ENCODE measurements at regions of chr1 and their contacts with region 1.

Region 1: DNA sequence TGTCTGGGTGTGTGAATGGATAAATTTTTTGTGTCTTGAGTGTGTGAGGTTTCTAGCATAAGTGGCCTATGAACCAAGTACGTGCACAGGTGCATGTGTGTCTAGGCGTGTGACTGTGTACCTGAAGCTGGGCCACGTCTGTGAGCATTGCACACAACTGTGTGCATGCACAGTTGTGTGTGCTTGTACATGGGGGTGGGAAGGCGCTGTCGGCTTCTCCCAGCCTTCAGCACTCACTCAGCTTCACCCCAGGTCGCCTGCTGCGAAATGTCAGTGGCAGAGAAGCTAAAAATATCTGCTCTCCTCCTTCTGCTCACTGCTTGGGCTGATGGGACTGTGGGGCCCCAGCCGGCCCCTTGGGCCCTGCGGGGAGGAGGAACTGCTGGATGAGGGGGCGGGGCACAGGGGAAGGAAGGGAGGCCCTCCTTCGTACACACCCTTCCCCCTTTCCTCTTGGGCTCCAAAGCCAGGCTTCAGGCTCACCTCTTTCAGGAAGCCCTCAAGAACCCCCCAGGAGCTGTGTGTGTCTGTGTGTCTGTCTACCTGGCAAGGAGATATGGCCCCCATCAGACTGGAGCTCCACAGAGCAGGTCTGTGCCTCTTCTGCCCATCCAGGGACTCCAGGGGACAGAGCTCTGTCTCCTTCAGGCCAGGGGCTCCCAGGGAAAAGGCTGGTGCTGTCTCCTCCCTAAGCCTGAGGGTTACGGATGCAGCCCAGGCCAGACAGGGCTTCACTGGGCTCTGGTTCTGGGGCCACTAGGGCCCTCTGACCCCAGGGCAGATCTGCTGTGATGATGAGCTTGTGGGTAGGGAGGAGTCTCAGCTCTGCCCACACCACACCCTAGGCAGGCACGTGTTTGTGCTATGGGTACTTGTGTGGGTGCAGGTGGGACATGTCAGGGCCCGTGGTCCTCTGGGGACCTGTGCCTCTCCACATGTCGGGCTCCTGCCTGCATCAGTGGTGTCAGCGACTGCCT is 35.6 kb upstream of the WASF2 start:
- DNase-seq: peak; percentile 79
- ATAC-seq: peak; percentile 63
- H3K4me3 Mint-ChIP-seq: peak overlapping the region; percentile 25
- H3K27ac Mint-ChIP-seq: peak overlapping the region; percentile 43
- H3K4me1 Mint-ChIP-seq: peaks cover 59% of the 10 kb centered on the region
- H3K27me3 Mint-ChIP-seq: peaks cover 7% of the 10 kb centered on the region

Region 2: GRCh38 chr1:27603681-27604578 is 78.3 kb after region 1 on chr1 and contains the start of gene AHDC1:
- CTCF ChIA-PET with region 1: interaction called, 12 read pairs
- DNase-seq: peak; percentile 93
- ATAC-seq: peak; percentile 90
- H3K4me3 Mint-ChIP-seq: peak within 1 kb of the TSS; percentile 94
- H3K27ac Mint-ChIP-seq: peak within 1 kb of the TSS; percentile 70
- H3K4me1 Mint-ChIP-seq: peaks cover 37% of the 10 kb centered on the region
- H3K27me3 Mint-ChIP-seq: no peaks in the 10 kb centered on the region
- total RNA-seq, gene AHDC1: 15.8 to 18.5 TPM

Region 3: GRCh38 chr1:27609210-27609555 is 83.6 kb after region 1 on chr1:
- CTCF ChIA-PET with region 1: interaction called, 12 read pairs
- DNase-seq: no peak
- ATAC-seq: peak; percentile 28
- H3K4me3 Mint-ChIP-seq: no peak overlapping the region
- H3K27ac Mint-ChIP-seq: no peak overlapping the region
- H3K4me1 Mint-ChIP-seq: peaks cover 21% of the 10 kb centered on the region
- H3K27me3 Mint-ChIP-seq: no peaks in the 10 kb centered on the region